ENCODE measurements at regions of chr11 and their contacts with region 1.

Region 1: GRCh38 chr11:27485930-27486773 is 13.6 kb upstream of the LGR4 start:
- DNase-seq: peak; percentile 42
- ATAC-seq: no peak
- H3K4me3 Mint-ChIP-seq: no peak overlapping the region
- H3K27ac Mint-ChIP-seq: no peak overlapping the region
- H3K4me1 Mint-ChIP-seq: no peaks in the 10 kb centered on the region
- H3K27me3 Mint-ChIP-seq: no peaks in the 10 kb centered on the region

Region 2: GRCh38 chr11:26286472-26287066 is 1199.6 kb before region 1 on chr11:
- CTCF ChIA-PET with region 1: interaction called, 3 read pairs
- POLR2A ChIA-PET with region 1: no interaction called
- intact Hi-C with region 1: loop called in 1 of 2 experiments (anchors 5 kb)
- DNase-seq: peak; percentile 3
- ATAC-seq: no peak
- H3K4me3 Mint-ChIP-seq: no peak overlapping the region
- H3K27ac Mint-ChIP-seq: no peak overlapping the region
- H3K4me1 Mint-ChIP-seq: peaks cover 3% of the 10 kb centered on the region
- H3K27me3 Mint-ChIP-seq: peaks cover 9% of the 10 kb centered on the region

Region 3: GRCh38 chr11:26753723-26754504 is 732.2 kb before region 1 on chr11:
- CTCF ChIA-PET with region 1: interaction called, 3 read pairs
- POLR2A ChIA-PET with region 1: no interaction called
- intact Hi-C with region 1: loop called in 1 of 2 experiments (anchors 5 kb)
- DNase-seq: peak; percentile 27
- ATAC-seq: no peak
- H3K4me3 Mint-ChIP-seq: no peak overlapping the region
- H3K27ac Mint-ChIP-seq: no peak overlapping the region
- H3K4me1 Mint-ChIP-seq: no peaks in the 10 kb centered on the region
- H3K27me3 Mint-ChIP-seq: no peaks in the 10 kb centered on the region

Region 4: GRCh38 chr11:27200779-27201453 is 285.2 kb before region 1 on chr11:
- CTCF ChIA-PET with region 1: interaction called, 10 read pairs
- POLR2A ChIA-PET with region 1: no interaction called
- intact Hi-C with region 1: no loop called
- DNase-seq: no peak
- ATAC-seq: no peak
- H3K4me3 Mint-ChIP-seq: no peak overlapping the region
- H3K27ac Mint-ChIP-seq: no peak overlapping the region
- H3K4me1 Mint-ChIP-seq: no peaks in the 10 kb centered on the region
- H3K27me3 Mint-ChIP-seq: peaks cover 5% of the 10 kb centered on the region

Region 5: GRCh38 chr11:27497284-27497866 is 11.2 kb after region 1 on chr11:
- CTCF ChIA-PET with region 1: interaction called, 107 read pairs
- POLR2A ChIA-PET with region 1: no interaction called
- intact Hi-C with region 1: no loop called
- DNase-seq: no peak
- ATAC-seq: no peak
- H3K4me3 Mint-ChIP-seq: no peak overlapping the region
- H3K27ac Mint-ChIP-seq: no peak overlapping the region
- H3K4me1 Mint-ChIP-seq: peaks cover 13% of the 10 kb centered on the region
- H3K27me3 Mint-ChIP-seq: no peaks in the 10 kb centered on the region

Measured in activated CD4-positive, alpha-beta T cell treated with anti-CD3 and anti-CD28 coated beads for 36 hours (primary cell).